Natural killer cell (primary cell): ENCODE measurements at regions of chr16 and their contacts with region 1.

Region 1: GRCh38 chr16:48609652-48610029 is 339 bp downstream of the N4BP1 start:
- DNase-seq: no peak
- ATAC-seq: peak; percentile 46 to 65 (median 57)
- H3K4me3 ChIP-seq: peak overlapping the region; percentile 88
- H3K4me3 Mint-ChIP-seq: peak overlapping the region; percentile 91
- H3K27ac ChIP-seq: peak overlapping the region; percentile 76
- H3K27ac Mint-ChIP-seq: peak overlapping the region in 1 of 2 donors; percentile 96
- H3K4me1 ChIP-seq: peaks cover 74% of the 10 kb centered on the region
- H3K4me1 Mint-ChIP-seq: peaks cover 35 to 53% of the 10 kb centered on the region in 2 donors
- H3K27me3 ChIP-seq: no peaks in the 10 kb centered on the region
- H3K27me3 Mint-ChIP-seq: no peaks in the 10 kb centered on the region
- CTCF ChIP-seq: no peak

Region 2: DNA sequence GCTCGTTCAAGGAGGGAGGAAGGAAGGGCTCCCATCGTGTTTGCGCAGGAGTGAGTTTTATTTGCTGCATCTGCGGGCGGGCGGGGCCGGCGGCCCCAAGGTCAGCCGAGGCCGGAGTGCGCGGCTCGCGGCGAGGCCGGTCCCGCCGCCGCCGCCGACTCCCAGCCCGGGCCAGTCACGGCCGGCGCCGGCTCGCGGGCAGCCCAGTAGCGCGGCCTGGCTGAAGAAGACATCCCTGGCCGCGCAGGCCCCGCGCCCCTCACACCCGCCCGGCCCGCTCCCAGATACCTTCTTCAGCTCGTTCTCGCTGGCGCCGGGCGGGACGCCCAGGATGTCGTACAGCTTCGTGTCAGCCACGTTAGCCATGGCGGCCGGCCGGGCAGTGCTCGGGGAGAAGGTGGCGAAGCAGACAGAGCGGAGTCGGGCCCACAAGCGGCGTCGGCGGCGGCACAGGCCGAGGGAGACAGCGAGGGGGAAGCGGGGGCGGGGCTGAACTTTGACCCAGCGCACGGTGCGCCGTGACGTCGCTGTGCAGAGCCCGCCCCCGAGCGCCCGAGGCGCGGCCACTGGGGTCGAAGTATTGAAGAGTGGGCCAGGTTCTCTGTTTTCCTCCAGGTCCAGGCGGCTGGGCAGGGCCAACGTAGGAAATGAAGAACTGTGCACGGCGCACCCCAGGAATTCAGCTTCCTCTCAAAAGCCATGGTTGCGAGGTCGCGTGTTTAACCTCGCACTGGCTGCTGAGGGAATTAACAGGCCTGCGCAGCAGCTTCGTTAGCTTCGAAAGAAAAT is 1636.2 kb before region 1 on chr16 and contains the start of gene DNAJA2:
- intact Hi-C with region 1: loop called (anchors 1 kb)
- DNase-seq: peak; percentile 94 to 96
- ATAC-seq: peak; percentile 91 to 99 (median 93)
- H3K4me3 ChIP-seq: peak within 1 kb of the TSS; percentile 76
- H3K4me3 Mint-ChIP-seq: peak within 1 kb of the TSS; percentile 94
- H3K27ac ChIP-seq: peak within 1 kb of the TSS; percentile 97
- H3K27ac Mint-ChIP-seq: peak within 1 kb of the TSS; percentile 95 to 98
- H3K4me1 ChIP-seq: peaks cover 18% of the 10 kb centered on the region
- H3K4me1 Mint-ChIP-seq: peaks cover 28 to 33% of the 10 kb centered on the region in 2 donors
- H3K27me3 ChIP-seq: no peaks in the 10 kb centered on the region
- H3K27me3 Mint-ChIP-seq: no peaks in the 10 kb centered on the region
- CTCF ChIP-seq: no peak
- total RNA-seq, gene DNAJA2: 71.8 to 83.2 (median 74.5) TPM

Region 3: DNA sequence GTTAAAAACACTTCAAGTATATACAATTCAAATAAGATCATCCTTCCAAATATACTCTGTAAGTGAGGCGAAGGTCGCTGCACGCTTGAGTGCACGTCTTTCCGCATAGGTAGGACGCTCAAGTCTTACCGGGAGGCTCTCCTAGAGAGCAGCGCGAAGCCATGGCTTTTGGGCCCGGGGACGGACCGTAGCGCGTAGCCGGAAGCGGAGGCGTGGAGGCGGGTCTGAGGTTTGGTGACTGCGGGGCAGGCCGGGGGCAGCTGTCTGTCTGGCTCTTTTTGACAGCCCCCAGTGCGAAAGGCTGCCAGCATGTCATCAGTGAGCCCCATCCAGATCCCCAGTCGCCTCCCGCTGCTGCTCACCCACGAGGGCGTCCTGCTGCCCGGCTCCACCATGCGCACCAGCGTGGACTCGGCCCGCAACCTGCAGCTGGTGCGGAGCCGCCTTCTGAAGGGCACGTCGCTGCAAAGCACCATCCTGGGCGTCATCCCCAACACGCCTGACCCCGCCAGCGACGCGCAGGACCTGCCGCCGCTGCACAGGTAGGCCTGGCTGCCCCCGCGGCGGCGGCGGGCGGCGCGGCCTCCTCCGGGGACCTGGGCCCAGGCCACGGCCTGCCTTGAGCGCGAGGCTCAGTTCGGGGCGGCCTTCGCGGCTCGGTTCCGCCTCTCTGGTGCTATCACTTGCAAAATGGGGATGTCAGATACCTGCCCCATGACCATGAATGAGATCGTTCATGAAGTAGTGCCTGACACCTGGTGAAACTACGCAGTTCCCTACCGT is 365.4 kb before region 1 on chr16 and contains the start of gene LONP2:
- intact Hi-C with region 1: loop called (anchors 5 kb)
- DNase-seq: peak; percentile 91 to 93
- ATAC-seq: peak; percentile 95 to 98 (median 97)
- H3K4me3 ChIP-seq: peak within 1 kb of the TSS; percentile 73
- H3K4me3 Mint-ChIP-seq: peak within 1 kb of the TSS; percentile 90
- H3K27ac ChIP-seq: peak within 1 kb of the TSS; percentile 82
- H3K27ac Mint-ChIP-seq: peak within 1 kb of the TSS; percentile 80 to 87
- H3K4me1 ChIP-seq: peaks cover 22% of the 10 kb centered on the region
- H3K4me1 Mint-ChIP-seq: peaks cover 28 to 31% of the 10 kb centered on the region in 2 donors
- H3K27me3 ChIP-seq: no peaks in the 10 kb centered on the region
- H3K27me3 Mint-ChIP-seq: no peaks in the 10 kb centered on the region
- CTCF ChIP-seq: no peak
- total RNA-seq, gene LONP2: 48.6 to 87.8 (median 61.7) TPM

Region 4: DNA sequence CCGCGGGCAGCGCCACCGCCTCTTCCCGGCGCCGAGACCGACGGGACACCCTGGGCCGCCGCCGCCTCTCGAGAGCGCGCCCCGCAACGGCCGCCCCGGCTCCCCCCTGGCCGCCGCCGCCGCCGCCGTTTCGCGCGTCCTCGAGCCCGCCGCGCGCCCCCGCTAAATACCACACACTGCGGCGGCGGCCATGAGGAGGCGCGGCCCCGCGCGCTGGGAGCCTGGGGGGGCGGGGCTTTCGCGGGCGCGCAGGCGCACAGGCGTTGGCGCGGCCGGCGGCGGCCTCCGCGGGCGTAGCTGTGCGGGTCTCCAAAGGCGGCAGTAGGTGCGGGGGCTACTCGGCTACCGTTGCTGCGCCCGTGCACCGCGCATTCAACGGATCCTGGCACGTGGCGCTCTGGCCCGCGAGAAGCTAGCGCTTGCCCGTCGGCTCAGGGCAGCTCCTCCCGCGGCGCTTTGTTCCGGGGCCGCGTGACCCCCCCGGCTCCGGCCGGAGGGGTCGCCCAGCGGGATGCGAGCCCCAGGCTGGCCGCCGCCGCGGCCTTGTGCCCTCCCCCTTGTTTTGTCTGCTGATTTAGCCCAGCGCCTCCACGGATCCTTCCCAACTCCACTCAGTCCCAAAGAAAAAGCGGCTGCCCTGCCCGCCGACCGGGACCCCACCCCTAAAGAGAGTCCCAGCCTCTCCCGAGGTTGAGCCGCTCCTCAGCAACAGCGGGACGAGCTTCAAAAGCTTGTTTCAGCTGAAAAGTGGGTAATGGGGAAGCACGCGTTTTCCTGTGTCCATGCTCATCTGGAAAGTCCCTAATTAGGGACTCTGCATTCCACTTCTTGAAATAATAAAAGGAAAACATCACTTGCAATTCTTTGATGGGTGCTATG is 224.1 kb before region 1 on chr16 and contains the start of gene SIAH1:
- intact Hi-C with region 1: loop called (anchors 5 kb)
- DNase-seq: peak; percentile 89 to 93
- ATAC-seq: peak; percentile 81 to 94 (median 87)
- H3K4me3 ChIP-seq: peak within 1 kb of the TSS; percentile 64
- H3K4me3 Mint-ChIP-seq: peak within 1 kb of the TSS; percentile 92
- H3K27ac ChIP-seq: peak within 1 kb of the TSS; percentile 71
- H3K27ac Mint-ChIP-seq: peak within 1 kb of the TSS; percentile 85 to 91
- H3K4me1 ChIP-seq: peaks cover 9% of the 10 kb centered on the region
- H3K4me1 Mint-ChIP-seq: peaks cover 24 to 28% of the 10 kb centered on the region in 2 donors
- H3K27me3 ChIP-seq: no peaks in the 10 kb centered on the region
- H3K27me3 Mint-ChIP-seq: no peaks in the 10 kb centered on the region
- CTCF ChIP-seq: no peak
- total RNA-seq, gene SIAH1: 52.9 to 57.7 (median 55.5) TPM

Region 5: DNA sequence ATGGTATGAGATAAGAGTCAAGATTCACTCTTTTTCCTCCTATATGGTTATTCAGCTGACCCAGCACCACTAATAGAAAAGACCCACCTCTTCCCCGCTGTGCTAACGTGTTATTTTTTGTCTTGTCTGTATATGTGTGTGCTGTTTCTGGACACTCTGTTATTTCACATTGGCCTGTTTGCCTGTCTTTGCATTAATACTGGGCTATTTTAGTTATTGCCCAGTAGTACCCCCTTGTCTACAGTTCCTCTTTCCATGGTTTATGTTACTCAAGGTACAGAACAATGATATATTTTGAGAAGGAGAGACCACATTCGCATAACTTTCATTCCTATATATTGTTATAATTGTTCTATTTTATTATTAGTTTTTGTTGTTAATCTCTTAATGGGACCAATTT is 150.5 kb before region 1 on chr16:
- intact Hi-C with region 1: loop called (anchors 2 kb)
- DNase-seq: no peak
- ATAC-seq: no peak
- H3K4me3 ChIP-seq: no peak overlapping the region
- H3K4me3 Mint-ChIP-seq: peak overlapping the region; percentile 73
- H3K27ac ChIP-seq: peak overlapping the region; percentile 68
- H3K27ac Mint-ChIP-seq: peak overlapping the region; percentile 81 to 88
- H3K4me1 ChIP-seq: peaks cover 17% of the 10 kb centered on the region
- H3K4me1 Mint-ChIP-seq: peaks cover 29 to 42% of the 10 kb centered on the region in 2 donors
- H3K27me3 ChIP-seq: no peaks in the 10 kb centered on the region
- H3K27me3 Mint-ChIP-seq: peaks cover 0 to 7% of the 10 kb centered on the region in 2 donors
- CTCF ChIP-seq: no peak

Region 6: GRCh38 chr16:48556913-48557351 is 52.7 kb before region 1 on chr16:
- intact Hi-C with region 1: loop called (anchors 5 kb)
- DNase-seq: no peak
- ATAC-seq: peak; percentile 58 to 74 (median 68)
- H3K4me3 ChIP-seq: no peak overlapping the region
- H3K4me3 Mint-ChIP-seq: no peak overlapping the region
- H3K27ac ChIP-seq: no peak overlapping the region
- H3K27ac Mint-ChIP-seq: peak overlapping the region; percentile 60 to 74
- H3K4me1 ChIP-seq: peaks cover 10% of the 10 kb centered on the region
- H3K4me1 Mint-ChIP-seq: peaks cover 67 to 82% of the 10 kb centered on the region in 2 donors
- H3K27me3 ChIP-seq: no peaks in the 10 kb centered on the region
- H3K27me3 Mint-ChIP-seq: no peaks in the 10 kb centered on the region
- CTCF ChIP-seq: no peak